ENCODE measurements at regions of chr12 and their contacts with region 1.

Region 1: DNA sequence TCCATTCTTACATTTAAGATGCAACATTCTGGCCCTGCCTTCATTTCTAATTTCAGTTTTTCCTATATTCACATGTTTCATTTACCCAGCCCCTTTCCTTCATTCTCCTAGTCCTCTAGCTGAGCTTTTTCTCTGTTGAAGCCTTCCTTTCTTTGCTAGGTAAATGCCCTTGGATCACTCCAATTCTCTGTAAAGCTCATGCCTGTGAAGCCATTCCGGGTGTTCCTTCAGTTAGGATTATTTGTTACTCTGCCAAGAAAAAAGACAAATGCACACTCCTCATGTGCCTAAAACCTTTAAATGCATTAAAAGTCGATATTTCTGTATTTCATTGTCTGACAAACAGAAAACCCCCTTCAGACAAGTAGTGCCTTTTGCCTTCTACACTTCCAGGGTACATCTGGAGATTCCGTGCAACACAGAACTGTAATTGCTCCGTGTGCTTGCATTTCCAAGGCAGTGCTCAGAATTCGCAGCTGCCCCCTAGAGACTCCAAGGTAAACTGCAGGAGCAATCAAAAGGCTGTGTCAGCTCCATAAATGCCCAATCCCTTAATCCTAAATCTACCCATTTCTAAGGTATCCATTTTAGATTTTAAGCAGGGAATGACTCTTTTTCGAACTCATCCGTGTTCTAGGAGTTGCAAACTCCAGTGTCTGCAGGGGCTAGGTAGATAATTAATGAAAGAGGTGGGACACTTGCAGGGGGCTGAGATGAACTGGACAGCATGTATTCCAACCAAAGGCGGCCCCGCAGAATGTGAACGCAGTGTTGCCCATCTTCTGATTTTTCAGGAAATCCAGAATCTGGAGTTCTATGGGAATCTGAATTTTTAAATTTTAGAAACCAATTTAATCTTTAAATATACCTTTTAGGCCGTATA is 320.2 kb downstream of the GRIN2B start:
- DNase-seq: peak; percentile 67
- H3K4me3 ChIP-seq: no peak overlapping the region
- H3K27ac ChIP-seq: no peak overlapping the region
- H3K4me1 ChIP-seq: peaks cover 0 to 3% (median 0%) of the 10 kb centered on the region in 4 donors
- H3K27me3 ChIP-seq: no peaks in the 10 kb centered on the region
- CTCF ChIP-seq: peak; percentile 53 to 86 (median 72)
- EP300 ChIP-seq: no peak
- POLR2A ChIP-seq: no peak

Region 2: GRCh38 chr12:11719678-11720099 is 1941.6 kb before region 1 on chr12:
- intact Hi-C with region 1: no loop called
- DNase-seq: peak; percentile 76
- H3K4me3 ChIP-seq: no peak overlapping the region
- H3K27ac ChIP-seq: peak overlapping the region; percentile 60 to 79 (median 70)
- H3K4me1 ChIP-seq: peaks cover 0 to 73% (median 54%) of the 10 kb centered on the region in 4 donors
- H3K27me3 ChIP-seq: no peaks in the 10 kb centered on the region
- CTCF ChIP-seq: no peak
- EP300 ChIP-seq: no peak
- POLR2A ChIP-seq: no peak

Region 3: GRCh38 chr12:13255792-13256691 is 405.2 kb before region 1 on chr12:
- intact Hi-C with region 1: loop called (anchors 5 kb)
- DNase-seq: peak; percentile 97
- H3K4me3 ChIP-seq: peak overlapping the region in 3 of 4 donors; percentile 26 to 43 (median 43)
- H3K27ac ChIP-seq: peak overlapping the region in 1 of 4 donors; percentile 5
- H3K4me1 ChIP-seq: peaks cover 0 to 5% (median 2%) of the 10 kb centered on the region in 4 donors
- H3K27me3 ChIP-seq: no peaks in the 10 kb centered on the region
- CTCF ChIP-seq: peak; percentile 90 to 95 (median 93)
- EP300 ChIP-seq: no peak
- POLR2A ChIP-seq: no peak

Region 4: DNA sequence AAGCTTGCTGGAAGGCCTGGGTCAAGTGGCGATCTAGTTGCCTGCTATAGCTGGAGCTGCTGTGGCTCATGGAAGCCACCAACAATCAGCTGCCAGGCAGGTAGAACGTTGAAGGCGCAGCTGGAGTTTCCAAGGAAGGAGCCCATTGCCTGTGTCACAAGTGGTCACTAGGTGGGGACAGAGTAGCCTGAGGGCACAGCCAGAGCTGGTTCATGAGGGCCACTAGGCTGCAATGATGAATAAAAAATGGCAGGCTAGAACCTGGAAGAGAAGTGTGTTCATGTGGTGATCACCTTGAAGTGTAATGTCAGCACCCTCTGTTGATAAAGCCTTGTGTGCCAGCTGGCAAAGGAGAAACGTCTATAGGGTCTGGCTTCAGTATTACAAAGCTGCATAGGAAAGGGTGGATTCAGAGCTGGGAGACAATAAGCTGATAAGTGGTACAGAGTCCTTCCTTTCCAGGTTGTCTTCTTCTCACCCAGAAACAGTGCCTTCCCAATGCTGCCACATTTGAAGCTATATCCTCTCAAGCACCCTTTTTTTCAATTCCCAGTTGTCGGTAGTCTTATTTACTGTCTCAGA is 298.9 kb before region 1 on chr12:
- intact Hi-C with region 1: loop called (anchors 1 kb)
- DNase-seq: peak; percentile 71
- H3K4me3 ChIP-seq: no peak overlapping the region
- H3K27ac ChIP-seq: no peak overlapping the region
- H3K4me1 ChIP-seq: no peaks in the 10 kb centered on the region
- H3K27me3 ChIP-seq: no peaks in the 10 kb centered on the region
- CTCF ChIP-seq: peak; percentile 58 to 77 (median 74)
- EP300 ChIP-seq: no peak
- POLR2A ChIP-seq: no peak

Region 5: GRCh38 chr12:13465635-13466034 is 195.6 kb before region 1 on chr12:
- intact Hi-C with region 1: no loop called
- DNase-seq: no peak
- H3K4me3 ChIP-seq: no peak overlapping the region
- H3K27ac ChIP-seq: no peak overlapping the region
- H3K4me1 ChIP-seq: no peaks in the 10 kb centered on the region
- H3K27me3 ChIP-seq: no peaks in the 10 kb centered on the region
- CTCF ChIP-seq: no peak
- EP300 ChIP-seq: no peak
- POLR2A ChIP-seq: no peak